K562 (cell line): ENCODE measurements at regions of chr11 and their contacts with region 1.

Region 1: DNA sequence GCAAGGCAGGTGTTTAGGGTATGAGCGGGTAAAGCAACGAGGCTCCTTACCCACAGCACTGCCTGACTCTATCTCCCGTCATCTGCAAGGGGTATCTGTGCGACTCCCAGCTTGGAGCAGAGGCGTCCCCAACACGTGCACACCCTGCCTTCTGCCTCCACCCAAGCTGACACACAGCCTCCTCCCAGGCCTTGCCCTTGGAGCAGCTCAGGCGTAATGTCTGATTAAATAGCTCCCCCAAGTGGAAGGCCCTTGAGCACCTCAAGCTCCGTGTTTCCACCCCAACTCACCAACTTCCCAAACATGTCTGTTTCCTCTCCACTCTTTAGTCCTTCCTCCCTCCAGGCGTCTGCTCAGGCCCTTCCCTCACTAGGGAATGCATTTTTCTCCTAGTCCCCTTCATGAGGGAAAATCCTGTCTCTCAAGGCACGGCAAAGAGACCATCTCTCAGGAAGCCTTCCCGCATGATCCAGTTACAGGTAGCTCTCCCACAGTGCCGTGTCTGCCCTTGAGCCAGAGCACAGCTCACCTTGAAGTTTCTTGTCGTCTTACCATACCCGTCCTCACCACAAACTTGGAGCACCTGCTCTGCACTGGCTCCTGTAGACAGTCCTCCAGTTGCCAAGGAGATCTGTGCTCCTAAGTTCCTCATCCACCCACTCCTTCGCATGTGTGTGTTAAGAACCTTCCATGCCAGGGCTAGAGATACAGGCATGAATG is 15.8 kb downstream of the CYB5R2 start:
- DNase-seq: peak; percentile 35 to 76 (median 48)
- ATAC-seq: peak; percentile 99
- H3K4me3 ChIP-seq: no peak overlapping the region
- H3K27ac ChIP-seq: no peak overlapping the region
- H3K4me1 ChIP-seq: no peaks in the 10 kb centered on the region
- H3K27me3 ChIP-seq: peaks cover 0 to 24% of the 10 kb centered on the region in 2 experiments; a peak in 2 of 5 replicates
- CTCF ChIP-seq: peak; percentile 67 to 87 (median 70)
- EP300 ChIP-seq: no peak
- POLR2A ChIP-seq: no peak
- RAD21 ChIP-seq: peak; percentile 86 to 92

Region 2: DNA sequence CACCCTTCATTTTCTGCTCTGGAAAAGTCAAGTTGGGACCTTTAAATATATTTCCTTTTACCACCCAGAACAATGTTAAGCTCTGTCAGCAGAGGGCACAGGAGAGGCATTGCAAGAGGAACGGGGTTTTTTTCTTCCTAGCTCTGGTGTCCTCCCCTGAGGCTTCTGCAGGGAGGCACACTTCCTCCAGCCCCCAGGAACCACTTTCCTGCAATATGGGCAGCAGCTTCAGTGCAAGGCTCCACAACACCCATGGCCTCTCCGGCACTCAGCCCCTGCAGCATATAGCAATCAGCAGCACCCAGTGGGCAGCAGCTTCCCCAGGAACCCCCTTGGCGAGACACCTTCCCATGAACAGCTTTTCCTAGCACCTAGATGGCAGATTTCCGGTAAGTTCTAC is 304.4 kb before region 1 on chr11:
- CTCF ChIA-PET with region 1: no interaction called
- POLR2A ChIA-PET with region 1: no interaction called
- in situ Hi-C with region 1: no loop called
- intact Hi-C with region 1: loop called (anchors 1 kb)
- DNase-seq: peak; percentile 11 to 28 (median 16)
- ATAC-seq: peak; percentile 64; the same call in 2 of the 3 replicates
- H3K4me3 ChIP-seq: no peak overlapping the region
- H3K27ac ChIP-seq: no peak overlapping the region
- H3K4me1 ChIP-seq: no peaks in the 10 kb centered on the region
- H3K27me3 ChIP-seq: no peaks in the 10 kb centered on the region
- CTCF ChIP-seq: peak; percentile 39 to 59 (median 53); a peak in 5 of 6 replicates
- EP300 ChIP-seq: no peak
- POLR2A ChIP-seq: no peak
- RAD21 ChIP-seq: peak; percentile 66 to 72

Region 3: DNA sequence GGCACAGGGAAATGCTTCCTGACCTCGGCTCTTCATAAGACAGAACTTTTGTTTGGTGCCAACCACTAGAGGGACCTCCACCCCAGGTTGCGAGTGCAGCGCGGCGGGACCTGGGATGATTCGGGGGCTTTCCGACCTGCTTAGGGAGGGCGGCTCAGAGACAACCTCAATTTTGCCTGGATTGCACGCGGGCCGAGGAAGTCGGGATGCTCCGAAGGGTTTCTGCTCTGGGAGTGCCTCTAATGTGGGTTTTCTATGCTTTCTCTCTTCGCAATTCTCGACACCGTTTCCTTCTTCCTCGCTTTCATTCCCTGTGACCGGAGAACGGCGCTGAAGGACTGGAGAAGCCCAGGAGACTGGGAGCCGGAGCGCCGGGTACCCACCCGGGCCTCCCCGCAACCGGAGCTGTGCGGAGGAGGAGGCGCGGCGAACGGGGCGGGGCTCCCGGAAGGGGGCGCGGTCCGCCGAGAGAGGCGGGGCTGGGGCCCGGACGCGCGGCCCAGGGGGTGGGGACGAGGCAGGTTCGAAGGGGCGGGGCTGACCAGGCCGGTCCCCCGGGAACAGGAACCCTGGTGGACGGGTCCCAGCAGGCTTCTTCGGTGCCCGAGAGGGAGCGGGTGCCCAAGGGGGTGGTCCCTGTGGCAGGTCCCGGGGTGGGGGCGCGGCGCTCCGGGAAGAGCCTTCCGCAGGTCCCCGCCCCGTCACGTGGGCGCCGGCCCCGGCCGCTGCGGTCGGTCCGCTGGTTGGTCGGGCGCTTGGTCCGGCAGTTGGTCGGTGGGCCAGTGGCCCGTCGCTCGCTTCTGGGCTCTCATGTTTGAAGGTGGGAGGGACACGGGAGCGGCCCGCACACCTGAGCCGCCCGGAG is 144.0 kb before region 1 on chr11 and contains the start of gene PPFIBP2:
- CTCF ChIA-PET with region 1: no interaction called
- POLR2A ChIA-PET with region 1: interaction called, 3 read pairs
- in situ Hi-C with region 1: no loop called
- intact Hi-C with region 1: loop called (anchors 1 kb)
- DNase-seq: peak; percentile 72 to 97 (median 94)
- ATAC-seq: peak; percentile 99
- H3K4me3 ChIP-seq: peak within 1 kb of the TSS; percentile 70
- H3K27ac ChIP-seq: peak within 1 kb of the TSS; percentile 22; the same call in 1 of the 3 replicates
- H3K4me1 ChIP-seq: peaks cover 0 to 18% of the 10 kb centered on the region in 2 experiments; a peak in 3 of 5 replicates
- H3K27me3 ChIP-seq: peaks cover 4 to 28% of the 10 kb centered on the region in 2 experiments; a peak in 4 of 5 replicates
- CTCF ChIP-seq: peak; percentile 61 to 71 (median 67)
- EP300 ChIP-seq: no peak
- POLR2A ChIP-seq: no peak
- RAD21 ChIP-seq: peak; percentile 37 to 59
- polyA plus RNA-seq, gene PPFIBP2: 0.18 to 1.1 TPM

Region 4: DNA sequence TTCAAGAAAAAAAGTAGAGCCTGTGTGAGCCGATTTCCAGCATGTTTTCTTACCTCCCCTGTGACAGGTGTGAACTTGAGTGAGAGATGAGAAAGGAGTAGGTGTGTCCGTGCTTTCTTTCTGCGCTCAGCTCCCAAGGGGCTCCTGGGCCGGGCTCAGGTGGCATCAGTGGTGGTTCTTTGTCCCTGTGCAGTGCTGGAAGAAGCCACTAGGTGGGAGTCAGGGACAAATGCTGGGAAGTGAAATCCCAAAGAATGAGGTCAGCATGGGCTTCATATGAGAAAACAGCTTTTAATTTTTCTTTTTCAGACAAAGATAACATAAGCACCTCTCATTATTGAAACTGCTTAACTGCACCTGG is 85.8 kb before region 1 on chr11:
- CTCF ChIA-PET with region 1: interaction called, 17 read pairs
- POLR2A ChIA-PET with region 1: interaction called, 4 read pairs
- in situ Hi-C with region 1: loop called (anchors 5 kb)
- intact Hi-C with region 1: loop called (anchors 1 kb)
- DNase-seq: peak; percentile 51 to 69 (median 62)
- ATAC-seq: peak; percentile 92
- H3K4me3 ChIP-seq: no peak overlapping the region
- H3K27ac ChIP-seq: no peak overlapping the region
- H3K4me1 ChIP-seq: no peaks in the 10 kb centered on the region; a peak in 1 of 5 replicates
- H3K27me3 ChIP-seq: peaks cover 4 to 25% of the 10 kb centered on the region in 2 experiments; a peak in 4 of 5 replicates
- CTCF ChIP-seq: peak; percentile 75 to 90 (median 81)
- EP300 ChIP-seq: no peak
- POLR2A ChIP-seq: no peak
- RAD21 ChIP-seq: peak; percentile 91 to 95

Region 5: DNA sequence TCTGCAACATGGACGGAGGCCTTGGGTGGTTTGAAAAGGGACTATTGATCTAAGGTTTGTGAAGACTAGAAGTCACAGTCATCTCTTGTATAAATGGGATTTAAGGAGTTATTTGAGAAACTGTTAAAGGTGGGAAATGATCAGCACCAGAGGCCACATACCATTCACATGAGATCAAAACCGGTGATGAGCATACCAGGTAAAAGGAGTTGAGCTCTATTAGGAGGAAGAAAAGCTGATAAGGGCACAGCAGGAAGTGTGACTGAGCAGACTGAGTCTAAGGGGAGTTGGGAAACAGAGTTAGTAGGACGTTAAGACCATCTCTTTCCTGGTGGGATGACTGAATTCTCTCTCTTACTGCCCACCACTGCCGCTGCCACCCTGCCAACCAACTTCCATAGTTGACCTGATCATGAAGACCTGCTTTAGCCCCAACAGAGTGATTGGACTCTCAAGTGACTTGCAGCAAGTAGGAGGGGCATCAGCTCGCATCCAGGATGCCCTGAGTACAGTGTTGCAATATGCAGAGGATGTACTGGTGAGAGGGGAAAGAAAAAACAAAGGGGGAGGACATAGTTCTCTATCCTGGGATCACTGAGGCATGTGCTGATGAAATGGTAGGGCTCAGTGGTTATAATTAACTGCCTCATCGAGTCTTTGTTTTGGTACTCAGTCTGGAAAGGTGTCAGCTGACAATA is 337.3 kb after region 1 on chr11:
- CTCF ChIA-PET with region 1: no interaction called
- POLR2A ChIA-PET with region 1: no interaction called
- in situ Hi-C with region 1: no loop called
- intact Hi-C with region 1: no loop called
- DNase-seq: no peak
- ATAC-seq: no peak
- H3K4me3 ChIP-seq: no peak overlapping the region
- H3K27ac ChIP-seq: no peak overlapping the region
- H3K4me1 ChIP-seq: no peaks in the 10 kb centered on the region
- H3K27me3 ChIP-seq: no peaks in the 10 kb centered on the region
- CTCF ChIP-seq: no peak
- EP300 ChIP-seq: no peak
- POLR2A ChIP-seq: no peak
- RAD21 ChIP-seq: no peak